IMR-90 (cell line): ENCODE measurements at regions of chr3 and their contacts with region 1.

Region 1: GRCh38 chr3:58217209-58217811 is 6.5 kb upstream of the DNASE1L3 start:
- DNase-seq: peak; percentile 51
- ATAC-seq: peak; percentile 97
- H3K4me3 ChIP-seq: no peak overlapping the region
- H3K27ac ChIP-seq: no peak overlapping the region
- H3K4me1 ChIP-seq: peaks cover 2% of the 10 kb centered on the region; the same call in 1 of the 2 replicates
- H3K27me3 ChIP-seq: peaks cover 19% of the 10 kb centered on the region
- CTCF ChIP-seq: peak; percentile 64
- POLR2A ChIP-seq: no peak
- RAD21 ChIP-seq: peak; percentile 64

Region 2: GRCh38 chr3:57961828-57962447 is 255.4 kb before region 1 on chr3:
- CTCF ChIA-PET with region 1: interaction called, 3 read pairs
- POLR2A ChIA-PET with region 1: no interaction called
- dilution Hi-C with region 1: no loop called
- in situ Hi-C with region 1: no loop called
- intact Hi-C with region 1: loop called (anchors 5 kb)
- DNase-seq: peak; percentile 61
- ATAC-seq: peak; percentile 64
- H3K4me3 ChIP-seq: no peak overlapping the region
- H3K27ac ChIP-seq: no peak overlapping the region
- H3K4me1 ChIP-seq: peaks cover 2% of the 10 kb centered on the region; the same call in 1 of the 2 replicates
- H3K27me3 ChIP-seq: no peaks in the 10 kb centered on the region
- CTCF ChIP-seq: peak; percentile 66
- POLR2A ChIP-seq: no peak
- RAD21 ChIP-seq: peak; percentile 74

Region 3: DNA sequence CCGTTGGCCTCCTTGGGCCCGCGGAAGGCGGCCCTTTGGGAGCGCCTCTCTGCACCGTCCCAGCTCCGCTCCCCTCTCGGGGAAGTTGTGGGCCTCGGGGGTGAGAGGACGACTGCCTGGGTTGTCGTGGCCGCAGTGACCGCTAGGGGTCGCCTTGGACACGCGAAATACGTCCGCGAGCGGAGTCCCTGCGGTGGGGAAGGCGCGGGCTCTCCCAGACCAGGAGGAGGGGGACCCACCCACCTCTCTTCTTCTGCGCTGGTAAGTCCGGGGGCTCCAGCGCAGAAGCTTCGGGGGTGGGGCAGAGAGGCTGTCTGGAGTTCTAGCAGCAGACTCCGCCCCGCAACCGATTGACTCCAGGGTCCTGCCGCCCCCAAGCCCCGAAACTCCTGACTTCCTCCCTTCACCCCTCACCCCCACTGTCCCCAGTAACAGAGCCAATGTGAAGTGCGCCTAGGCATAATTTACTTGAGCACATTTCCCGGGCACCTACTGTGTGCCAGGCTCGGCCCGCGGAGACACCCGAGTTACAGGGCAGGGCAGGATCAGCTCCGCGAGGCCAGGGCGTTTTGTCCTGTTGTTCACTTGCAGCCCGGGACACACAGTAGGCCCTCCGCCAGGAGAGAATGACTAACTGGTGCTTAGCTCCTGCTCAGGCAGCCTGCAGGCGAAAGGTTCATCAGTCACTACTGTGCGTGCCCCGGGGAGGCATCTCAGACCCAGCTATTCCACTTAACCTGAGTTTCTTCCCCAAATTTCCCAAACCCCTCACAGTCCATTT is 39.4 kb before region 1 on chr3:
- CTCF ChIA-PET with region 1: interaction called, 6 read pairs
- POLR2A ChIA-PET with region 1: no interaction called
- dilution Hi-C with region 1: no loop called
- in situ Hi-C with region 1: no loop called
- intact Hi-C with region 1: loop called (anchors 5 kb)
- DNase-seq: peak; percentile 69
- ATAC-seq: peak; percentile 92
- H3K4me3 ChIP-seq: peak overlapping the region; percentile 24
- H3K27ac ChIP-seq: no peak overlapping the region
- H3K4me1 ChIP-seq: peaks cover 7% of the 10 kb centered on the region
- H3K27me3 ChIP-seq: peaks cover 8% of the 10 kb centered on the region; the same call in 1 of the 2 replicates
- CTCF ChIP-seq: peak; percentile 87
- POLR2A ChIP-seq: no peak
- RAD21 ChIP-seq: peak; percentile 71

Region 4: GRCh38 chr3:58188173-58188564 is 29.1 kb before region 1 on chr3:
- CTCF ChIA-PET with region 1: interaction called, 4 read pairs
- POLR2A ChIA-PET with region 1: no interaction called
- dilution Hi-C with region 1: no loop called
- in situ Hi-C with region 1: no loop called
- intact Hi-C with region 1: loop called (anchors 1 kb)
- DNase-seq: no peak
- ATAC-seq: no peak; the same call in 1 of the 2 replicates
- H3K4me3 ChIP-seq: no peak overlapping the region
- H3K27ac ChIP-seq: no peak overlapping the region
- H3K4me1 ChIP-seq: no peaks in the 10 kb centered on the region
- H3K27me3 ChIP-seq: peaks cover 6% of the 10 kb centered on the region
- CTCF ChIP-seq: no peak
- POLR2A ChIP-seq: no peak
- RAD21 ChIP-seq: no peak